Spleen (tissue), 13 donors: ENCODE measurements at regions of chr16 and their contacts with region 1.

Region 1: GRCh38 chr16:48609652-48610029 is 339 bp downstream of the N4BP1 start:
- DNase-seq: peak; percentile 95
- H3K4me3 ChIP-seq: peak overlapping the region; percentile 90 to 98 (median 96)
- H3K27ac ChIP-seq: peak overlapping the region; percentile 91 to 98 (median 94)
- H3K4me1 ChIP-seq: peaks cover 27 to 85% (median 81%) of the 10 kb centered on the region in 6 donors
- H3K27me3 ChIP-seq: no peaks in the 10 kb centered on the region
- CTCF ChIP-seq: no peak
- POLR2A ChIP-seq: no peak

Region 2: DNA sequence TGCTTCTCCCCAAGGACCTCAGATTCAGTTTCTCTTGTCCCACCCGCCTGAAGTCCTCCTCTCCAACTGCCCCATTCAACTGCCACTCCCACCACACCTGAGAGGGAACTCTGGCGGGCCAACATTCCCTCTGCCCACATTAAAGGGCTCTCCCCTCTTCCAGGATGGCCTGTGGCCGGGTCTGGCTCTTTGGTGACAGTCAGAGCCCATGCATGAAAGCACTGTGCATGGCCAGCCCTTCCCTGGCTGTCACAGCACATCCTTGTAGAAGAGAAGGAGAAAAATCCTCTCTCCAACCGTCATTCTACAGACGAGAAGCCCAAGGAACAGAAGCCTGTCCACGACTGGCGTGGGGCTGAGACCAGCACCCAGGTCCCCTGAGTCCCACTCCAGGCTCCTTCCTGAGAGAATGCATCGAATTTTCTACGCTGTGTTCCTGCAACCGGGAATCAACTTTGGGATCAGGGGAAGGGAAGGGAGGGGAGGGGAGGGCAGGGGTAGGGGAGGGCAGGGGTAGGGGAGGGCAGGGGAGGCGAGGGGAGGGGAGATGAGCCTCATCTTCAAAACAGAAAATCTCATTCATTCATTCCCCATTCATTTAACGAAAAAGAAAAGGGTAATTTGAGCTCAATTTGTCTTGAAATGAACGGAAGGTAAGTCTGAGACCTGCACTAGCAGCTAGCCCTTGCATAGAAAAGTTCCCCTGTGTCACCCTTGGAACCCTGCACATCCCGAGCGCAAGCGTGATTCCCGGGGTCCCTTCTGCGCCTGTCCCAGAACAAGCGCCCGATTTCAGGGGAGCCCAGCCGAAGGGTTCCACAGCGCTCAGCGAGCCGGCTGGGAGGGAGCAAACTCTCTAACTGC is 453.5 kb before region 1 on chr16 and contains the start of gene ABCC12:
- intact Hi-C with region 1: no loop called
- DNase-seq: no peak
- H3K4me3 ChIP-seq: no peak within 1 kb of the TSS
- H3K27ac ChIP-seq: no peak within 1 kb of the TSS
- H3K4me1 ChIP-seq: peaks cover 0 to 8% (median 5%) of the 10 kb centered on the region in 6 donors
- H3K27me3 ChIP-seq: peaks cover 0 to 14% (median 0%) of the 10 kb centered on the region in 7 donors
- CTCF ChIP-seq: no peak
- POLR2A ChIP-seq: no peak
- total RNA-seq, gene ABCC12: not detected

Region 3: GRCh38 chr16:48365581-48366164 is 244.0 kb before region 1 on chr16:
- intact Hi-C with region 1: loop called (anchors 5 kb)
- DNase-seq: peak; percentile 97
- H3K4me3 ChIP-seq: peak overlapping the region; percentile 50 to 81 (median 55)
- H3K27ac ChIP-seq: peak overlapping the region; percentile 78 to 92 (median 89)
- H3K4me1 ChIP-seq: peaks cover 14 to 79% (median 29%) of the 10 kb centered on the region in 6 donors
- H3K27me3 ChIP-seq: no peaks in the 10 kb centered on the region
- CTCF ChIP-seq: peak in 1 of 11 experiments; percentile 10
- POLR2A ChIP-seq: peak in 1 of 3 donors; percentile 63

Region 4: GRCh38 chr16:48556913-48557351 is 52.7 kb before region 1 on chr16:
- intact Hi-C with region 1: loop called (anchors 10 kb)
- DNase-seq: no peak
- H3K4me3 ChIP-seq: no peak overlapping the region
- H3K27ac ChIP-seq: peak overlapping the region in 6 of 8 donors; percentile 56 to 85 (median 76)
- H3K4me1 ChIP-seq: peaks cover 33 to 99% (median 73%) of the 10 kb centered on the region in 6 donors
- H3K27me3 ChIP-seq: no peaks in the 10 kb centered on the region
- CTCF ChIP-seq: no peak
- POLR2A ChIP-seq: no peak